Dorsolateral prefrontal cortex (tissue), 120 donors: ENCODE measurements at regions of chr9 and their contacts with region 1.

Region 1: GRCh38 chr9:112717661-112718341 is at the start of gene INIP:
- DNase-seq: peak; percentile 93 to 98 (median 96)
- H3K4me3 ChIP-seq: peak within 1 kb of the TSS; percentile 70 to 99 (median 92)
- H3K27ac ChIP-seq: peak within 1 kb of the TSS; percentile 66 to 98 (median 90)
- H3K27me3 ChIP-seq: no peaks in the 10 kb centered on the region
- CTCF ChIP-seq: peak in 25 of 56 donors; percentile 7 to 47 (median 24)
- total RNA-seq, gene INIP: 23.7 to 52.8 (median 39.3) TPM

Region 2: GRCh38 chr9:112097712-112098688 is 619.8 kb before region 1 on chr9:
- intact Hi-C with region 1: loop called (anchors 10 kb)
- DNase-seq: peak in 6 of 10 donors; percentile 22 to 68 (median 52)
- H3K4me3 ChIP-seq: no peak overlapping the region
- H3K27ac ChIP-seq: no peak overlapping the region
- H3K27me3 ChIP-seq: no peaks in the 10 kb centered on the region
- CTCF ChIP-seq: peak; percentile 80 to 94 (median 88)

Region 3: GRCh38 chr9:112486221-112487007 is 231.4 kb before region 1 on chr9 and contains the start of gene KIAA1958:
- intact Hi-C with region 1: loop called in 1 of 2 experiments (anchors 5 kb)
- DNase-seq: peak; percentile 63 to 85 (median 76)
- H3K4me3 ChIP-seq: peak within 1 kb of the TSS; percentile 67 to 93 (median 85)
- H3K27ac ChIP-seq: peak within 1 kb of the TSS in 58 of 59 donors; percentile 38 to 93 (median 84)
- H3K27me3 ChIP-seq: no peaks in the 10 kb centered on the region
- CTCF ChIP-seq: peak in 3 of 56 donors; percentile 5 to 21 (median 19)
- total RNA-seq, gene KIAA1958: 12.9 to 46.2 (median 27.1) TPM

Region 4: DNA sequence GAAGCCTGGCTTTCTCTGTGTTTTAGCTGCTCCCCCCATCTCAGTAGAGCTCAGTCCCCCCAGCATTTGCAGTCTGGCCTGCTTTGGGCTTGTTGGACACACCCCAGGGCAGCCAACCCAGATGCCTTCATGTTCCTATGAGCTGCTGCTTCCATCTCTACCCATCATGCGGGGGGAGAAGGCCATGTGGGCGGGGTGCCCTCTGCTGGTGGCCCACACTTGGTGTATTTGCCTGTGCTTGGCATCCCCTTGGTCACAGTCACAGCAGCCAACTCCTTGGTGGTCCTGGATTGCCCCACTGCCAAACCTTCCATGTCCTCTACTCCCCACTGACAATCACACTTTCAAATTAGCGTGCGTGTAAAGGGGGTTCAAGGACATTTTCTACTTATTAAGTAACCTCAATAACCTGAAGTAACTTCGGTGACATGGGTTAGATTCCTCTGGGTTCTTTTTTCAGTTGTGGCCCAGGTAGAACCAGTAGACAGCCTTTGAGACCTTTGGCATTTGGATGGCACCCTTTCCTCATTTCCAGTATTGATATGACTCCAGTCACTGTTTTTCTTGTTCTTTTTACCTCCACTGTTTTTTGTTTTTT is 75.5 kb after region 1 on chr9:
- intact Hi-C with region 1: loop called (anchors 5 to 10 kb)
- DNase-seq: peak in 9 of 10 donors; percentile 56 to 88 (median 72)
- H3K4me3 ChIP-seq: no peak overlapping the region
- H3K27ac ChIP-seq: peak overlapping the region in 30 of 59 donors; percentile 3 to 73 (median 39)
- H3K27me3 ChIP-seq: no peaks in the 10 kb centered on the region
- CTCF ChIP-seq: peak in 55 of 56 donors; percentile 34 to 80 (median 62)

Region 5: GRCh38 chr9:112867416-112867991 is 149.7 kb after region 1 on chr9:
- intact Hi-C with region 1: no loop called
- DNase-seq: no peak
- H3K4me3 ChIP-seq: no peak overlapping the region
- H3K27ac ChIP-seq: peak overlapping the region in 2 of 59 donors; percentile 22 to 23
- H3K27me3 ChIP-seq: no peaks in the 10 kb centered on the region
- CTCF ChIP-seq: no peak

Region 6: DNA sequence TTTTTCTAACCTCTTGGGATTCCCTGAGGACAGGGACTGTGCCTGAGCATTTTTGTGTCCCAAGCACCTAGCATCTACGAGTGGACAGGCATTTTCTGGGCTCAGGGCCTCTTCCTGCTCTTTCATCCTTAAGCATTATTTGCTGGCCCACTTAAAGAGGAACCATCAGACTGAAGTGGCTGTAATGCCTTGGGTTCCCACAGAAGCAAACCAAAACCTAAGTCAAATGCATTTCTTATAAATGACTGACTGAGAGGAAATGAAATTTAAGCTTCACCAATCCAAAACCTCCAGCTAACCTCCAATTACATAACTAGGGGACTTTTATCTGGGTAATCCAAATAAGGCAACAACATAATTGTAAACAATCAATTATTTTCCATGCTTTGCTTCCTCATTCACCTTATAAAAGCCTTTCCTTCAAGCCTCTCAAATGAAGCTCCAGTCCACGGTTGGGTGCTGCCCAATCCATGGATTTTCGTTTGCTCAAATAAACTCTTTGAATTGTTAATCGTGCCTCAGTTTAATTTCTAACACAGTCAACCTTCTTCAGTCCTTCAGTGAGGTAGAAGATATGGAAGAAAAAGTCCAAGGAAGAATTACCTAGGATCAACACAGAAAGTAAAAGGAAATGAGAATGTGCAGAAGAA is 407.7 kb after region 1 on chr9:
- intact Hi-C with region 1: no loop called
- DNase-seq: no peak
- H3K4me3 ChIP-seq: no peak overlapping the region
- H3K27ac ChIP-seq: no peak overlapping the region
- H3K27me3 ChIP-seq: peaks cover 0 to 4% (median 0%) of the 10 kb centered on the region in 45 donors
- CTCF ChIP-seq: no peak